Heart left ventricle (tissue), 16 donors: ENCODE measurements at regions of chr17 and their contacts with region 1.

Region 1: DNA sequence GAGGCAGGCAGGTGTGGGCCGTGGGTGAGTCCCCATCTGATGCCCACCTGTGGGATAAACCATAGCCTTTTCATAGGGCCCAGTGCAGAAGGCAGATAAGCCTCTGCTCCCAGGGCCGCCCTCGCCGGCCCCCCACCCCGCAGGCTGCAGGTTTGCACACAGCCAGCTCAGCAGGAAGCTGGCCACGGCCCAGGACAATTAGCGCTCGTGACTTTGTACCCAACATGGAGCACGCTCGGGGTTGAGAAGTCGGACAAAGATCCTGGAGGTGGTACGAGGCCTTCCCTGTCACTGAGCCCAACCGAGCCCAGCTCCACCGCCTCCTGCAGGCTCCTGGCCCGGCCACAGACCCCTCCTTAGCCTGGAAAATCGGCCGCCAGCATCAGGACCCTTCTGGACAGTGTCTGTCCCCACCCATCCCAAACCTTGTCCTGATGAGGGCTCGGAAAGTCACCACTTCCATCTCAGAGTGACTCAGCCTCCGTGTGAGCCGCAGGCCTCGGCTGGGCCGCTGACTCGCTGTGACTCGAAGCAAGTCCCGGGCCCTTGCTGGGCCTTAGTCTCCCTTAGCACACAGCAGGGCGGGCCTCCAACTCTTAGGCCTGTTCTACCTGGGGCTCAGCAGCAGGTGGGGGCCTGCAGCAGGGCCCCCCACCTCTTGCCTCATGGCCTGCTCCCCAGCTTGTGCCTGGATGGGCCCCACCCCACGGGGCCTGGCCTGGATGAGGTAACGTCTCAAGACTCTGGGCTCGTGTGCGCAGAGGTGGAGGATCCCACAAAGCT is 22.7 kb downstream of the FAM83G start:
- DNase-seq: no peak
- ATAC-seq: peak in 1 of 4 donors; percentile 41
- H3K4me3 ChIP-seq: no peak overlapping the region
- H3K27ac ChIP-seq: no peak overlapping the region
- H3K4me1 ChIP-seq: no peaks in the 10 kb centered on the region
- H3K27me3 ChIP-seq: no peaks in the 10 kb centered on the region
- CTCF ChIP-seq: no peak
- POLR2A ChIP-seq: no peak

Region 2: DNA sequence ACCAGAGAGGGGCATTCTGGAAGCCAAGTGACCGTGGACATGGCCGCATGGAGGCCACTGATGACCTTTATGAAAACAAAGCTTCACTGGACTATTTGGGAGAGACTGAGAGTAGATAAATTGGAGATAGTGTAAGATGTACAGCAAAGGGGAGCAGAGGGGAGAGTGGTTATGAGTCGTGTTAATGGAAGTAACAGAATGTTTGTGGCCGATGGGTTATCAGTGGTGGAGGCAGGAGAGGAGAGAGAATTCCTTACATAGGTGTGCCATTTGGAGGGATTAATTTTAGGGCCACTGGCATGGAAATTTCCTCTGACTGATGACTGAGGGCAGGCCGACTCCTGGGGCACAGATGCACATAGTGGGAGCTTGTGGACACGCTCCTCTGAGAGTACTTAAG is 104.7 kb before region 1 on chr17:
- intact Hi-C with region 1: no loop called
- DNase-seq: no peak
- ATAC-seq: no peak
- H3K4me3 ChIP-seq: no peak overlapping the region
- H3K27ac ChIP-seq: no peak overlapping the region
- H3K4me1 ChIP-seq: no peaks in the 10 kb centered on the region
- H3K27me3 ChIP-seq: no peaks in the 10 kb centered on the region
- CTCF ChIP-seq: no peak
- POLR2A ChIP-seq: no peak

Region 3: DNA sequence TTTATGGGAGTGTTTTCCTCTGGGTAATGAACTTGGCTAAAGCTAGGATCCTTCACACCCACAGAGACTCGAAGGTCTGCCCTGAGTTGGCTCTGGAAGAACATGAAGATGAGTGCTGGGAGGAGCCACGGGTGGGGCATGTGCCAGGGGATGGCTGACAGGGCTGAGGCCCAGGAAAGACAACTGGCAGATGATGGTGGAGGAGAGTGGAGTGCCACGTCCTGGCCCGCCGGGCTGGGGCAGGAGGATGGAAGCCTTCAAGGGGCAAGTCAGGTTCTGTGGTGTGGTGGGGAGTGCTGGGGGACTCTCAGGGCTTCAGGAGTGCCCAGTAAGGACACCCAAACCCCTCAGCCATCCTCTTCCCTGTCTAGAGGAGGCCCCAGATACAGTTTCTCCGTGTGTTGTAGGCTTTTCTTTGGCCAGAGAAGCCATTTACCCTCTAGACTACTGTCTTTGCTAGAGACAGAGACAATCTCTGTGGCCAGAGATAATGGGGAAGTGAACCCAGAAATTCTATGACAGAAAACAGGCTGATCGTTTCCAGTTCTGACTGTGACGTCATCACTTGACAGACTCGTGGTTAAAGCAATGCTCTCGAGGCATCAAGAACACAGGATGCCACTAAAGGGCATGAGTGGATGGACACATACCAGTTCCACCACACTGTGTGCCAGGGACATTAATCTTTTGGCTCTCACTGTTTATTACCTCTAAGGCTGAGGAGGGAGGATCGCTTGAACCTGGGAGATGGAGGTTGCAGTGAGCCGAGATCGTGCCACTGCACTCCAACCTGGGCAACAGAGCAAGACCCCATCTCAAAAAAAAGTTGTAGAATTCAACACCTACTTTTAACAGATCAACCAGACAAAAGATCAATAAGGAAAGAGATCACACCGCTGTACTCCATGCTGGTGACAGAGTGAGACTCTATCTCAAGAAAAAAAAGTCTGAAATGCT is 48.5 kb before region 1 on chr17:
- intact Hi-C with region 1: no loop called
- DNase-seq: no peak
- ATAC-seq: peak; percentile 10 to 55 (median 22)
- H3K4me3 ChIP-seq: no peak overlapping the region
- H3K27ac ChIP-seq: no peak overlapping the region
- H3K4me1 ChIP-seq: no peaks in the 10 kb centered on the region
- H3K27me3 ChIP-seq: no peaks in the 10 kb centered on the region
- CTCF ChIP-seq: no peak
- POLR2A ChIP-seq: no peak

Region 4: GRCh38 chr17:18961607-18962493 is 20.0 kb before region 1 on chr17:
- intact Hi-C with region 1: loop called in 1 of 10 experiments (anchors 2 kb)
- DNase-seq: peak in 1 of 5 donors; percentile 51
- ATAC-seq: no peak
- H3K4me3 ChIP-seq: no peak overlapping the region
- H3K27ac ChIP-seq: no peak overlapping the region
- H3K4me1 ChIP-seq: peaks cover 0 to 2% (median 0%) of the 10 kb centered on the region in 12 donors
- H3K27me3 ChIP-seq: no peaks in the 10 kb centered on the region
- CTCF ChIP-seq: no peak
- POLR2A ChIP-seq: no peak